CD8-positive, alpha-beta memory T cell (primary cell): ENCODE measurements at regions of chr2 and their contacts with region 1.

Region 1: GRCh38 chr2:168977608-168978007 is 53.5 kb downstream of the ABCB11 start:
- DNase-seq: no peak
- H3K4me3 ChIP-seq: no peak overlapping the region
- H3K4me3 Mint-ChIP-seq: no peak overlapping the region
- H3K27ac ChIP-seq: no peak overlapping the region
- H3K27ac Mint-ChIP-seq: peak overlapping the region in 1 of 8 donors; percentile 33
- H3K4me1 ChIP-seq: no peaks in the 10 kb centered on the region
- H3K4me1 Mint-ChIP-seq: no peaks in the 10 kb centered on the region
- H3K27me3 ChIP-seq: no peaks in the 10 kb centered on the region
- H3K27me3 Mint-ChIP-seq: no peaks in the 10 kb centered on the region

Region 2: DNA sequence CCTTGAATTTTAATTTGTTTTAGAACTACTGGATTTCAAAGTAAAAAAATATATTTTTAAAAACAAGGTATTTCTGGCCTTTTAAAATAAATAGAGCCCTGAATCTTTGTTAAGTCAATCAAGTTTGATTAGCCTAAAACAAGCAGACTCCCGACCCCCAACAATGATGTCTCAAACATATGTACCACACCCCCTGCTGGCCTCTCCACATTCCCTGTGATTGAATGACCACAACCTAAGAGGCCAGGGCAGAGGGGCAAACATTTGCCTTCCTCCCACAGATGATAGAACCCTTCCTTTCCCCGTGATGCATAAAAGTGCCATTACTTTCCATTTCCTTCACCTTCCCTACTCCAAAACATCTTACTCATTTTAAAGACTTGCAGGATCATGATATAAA is 861.2 kb before region 1 on chr2:
- CTCF ChIA-PET with region 1: no interaction called
- POLR2A ChIA-PET with region 1: interaction called, 12 read pairs
- DNase-seq: no peak
- H3K4me3 ChIP-seq: no peak overlapping the region
- H3K4me3 Mint-ChIP-seq: no peak overlapping the region
- H3K27ac ChIP-seq: no peak overlapping the region
- H3K27ac Mint-ChIP-seq: no peak overlapping the region
- H3K4me1 ChIP-seq: no peaks in the 10 kb centered on the region
- H3K4me1 Mint-ChIP-seq: peaks cover 0 to 4% (median 0%) of the 10 kb centered on the region in 3 donors
- H3K27me3 ChIP-seq: no peaks in the 10 kb centered on the region
- H3K27me3 Mint-ChIP-seq: no peaks in the 10 kb centered on the region

Region 3: GRCh38 chr2:168825126-168825525 is 152.5 kb before region 1 on chr2:
- CTCF ChIA-PET with region 1: no interaction called
- POLR2A ChIA-PET with region 1: no interaction called
- DNase-seq: no peak
- H3K4me3 ChIP-seq: no peak overlapping the region
- H3K4me3 Mint-ChIP-seq: no peak overlapping the region
- H3K27ac ChIP-seq: no peak overlapping the region
- H3K27ac Mint-ChIP-seq: no peak overlapping the region
- H3K4me1 ChIP-seq: no peaks in the 10 kb centered on the region
- H3K4me1 Mint-ChIP-seq: no peaks in the 10 kb centered on the region
- H3K27me3 ChIP-seq: no peaks in the 10 kb centered on the region
- H3K27me3 Mint-ChIP-seq: peaks cover 2 to 3% of the 10 kb centered on the region in 2 donors

Region 4: GRCh38 chr2:169001116-169001815 is 23.7 kb after region 1 on chr2:
- CTCF ChIA-PET with region 1: no interaction called
- POLR2A ChIA-PET with region 1: no interaction called
- DNase-seq: no peak
- H3K4me3 ChIP-seq: no peak overlapping the region
- H3K4me3 Mint-ChIP-seq: no peak overlapping the region
- H3K27ac ChIP-seq: no peak overlapping the region
- H3K27ac Mint-ChIP-seq: no peak overlapping the region
- H3K4me1 ChIP-seq: no peaks in the 10 kb centered on the region
- H3K4me1 Mint-ChIP-seq: no peaks in the 10 kb centered on the region
- H3K27me3 ChIP-seq: no peaks in the 10 kb centered on the region
- H3K27me3 Mint-ChIP-seq: peaks cover 6 to 9% of the 10 kb centered on the region in 2 donors